ENCODE measurements at regions of chr6 and their contacts with region 1.

Region 1: GRCh38 chr6:4135665-4136353 is 434 bp upstream of the ECI2 start:
- DNase-seq: peak; percentile 74 to 90
- ATAC-seq: peak; percentile 81 to 84
- H3K4me3 ChIP-seq: peak overlapping the region; percentile 65
- H3K27ac ChIP-seq: peak overlapping the region; percentile 87 to 92
- H3K4me1 ChIP-seq: peaks cover 8% of the 10 kb centered on the region; the same call in 2 of the 3 replicates
- CTCF ChIP-seq: no peak
- EP300 ChIP-seq: no peak
- POLR2A ChIP-seq: peak; percentile 81
- RAD21 ChIP-seq: no peak

Region 2: GRCh38 chr6:4021133-4021853 is 114.5 kb before region 1 on chr6:
- CTCF ChIA-PET with region 1: no interaction called
- POLR2A ChIA-PET with region 1: interaction called, 16 read pairs
- DNase-seq: peak; percentile 60 to 96
- ATAC-seq: peak; percentile 86 to 88
- H3K4me3 ChIP-seq: peak overlapping the region; percentile 73
- H3K27ac ChIP-seq: peak overlapping the region; percentile 97 to 99
- H3K4me1 ChIP-seq: peaks cover 34% of the 10 kb centered on the region
- CTCF ChIP-seq: no peak; the same call in 2 of the 3 replicates
- EP300 ChIP-seq: no peak
- POLR2A ChIP-seq: peak; percentile 55
- RAD21 ChIP-seq: no peak

Region 3: GRCh38 chr6:4066029-4066755 is 69.6 kb before region 1 on chr6:
- CTCF ChIA-PET with region 1: no interaction called
- POLR2A ChIA-PET with region 1: interaction called, 10 read pairs
- DNase-seq: no peak
- ATAC-seq: no peak
- H3K4me3 ChIP-seq: no peak overlapping the region
- H3K27ac ChIP-seq: no peak overlapping the region
- H3K4me1 ChIP-seq: no peaks in the 10 kb centered on the region
- CTCF ChIP-seq: no peak
- EP300 ChIP-seq: no peak
- POLR2A ChIP-seq: no peak
- RAD21 ChIP-seq: no peak

Measured in A549 (cell line).